PC-9 (cell line): ENCODE measurements at regions of chr14 and their contacts with region 1.

Region 1: GRCh38 chr14:21308479-21309237 is 28.8 kb downstream of the RPGRIP1 start:
- DNase-seq: peak; percentile 84 to 94
- H3K4me3 ChIP-seq: peak overlapping the region; percentile 70
- H3K27ac ChIP-seq: peak overlapping the region; percentile 84
- H3K4me1 ChIP-seq: peaks cover 12% of the 10 kb centered on the region
- H3K27me3 ChIP-seq: no peaks in the 10 kb centered on the region
- CTCF ChIP-seq: no peak

Region 2: DNA sequence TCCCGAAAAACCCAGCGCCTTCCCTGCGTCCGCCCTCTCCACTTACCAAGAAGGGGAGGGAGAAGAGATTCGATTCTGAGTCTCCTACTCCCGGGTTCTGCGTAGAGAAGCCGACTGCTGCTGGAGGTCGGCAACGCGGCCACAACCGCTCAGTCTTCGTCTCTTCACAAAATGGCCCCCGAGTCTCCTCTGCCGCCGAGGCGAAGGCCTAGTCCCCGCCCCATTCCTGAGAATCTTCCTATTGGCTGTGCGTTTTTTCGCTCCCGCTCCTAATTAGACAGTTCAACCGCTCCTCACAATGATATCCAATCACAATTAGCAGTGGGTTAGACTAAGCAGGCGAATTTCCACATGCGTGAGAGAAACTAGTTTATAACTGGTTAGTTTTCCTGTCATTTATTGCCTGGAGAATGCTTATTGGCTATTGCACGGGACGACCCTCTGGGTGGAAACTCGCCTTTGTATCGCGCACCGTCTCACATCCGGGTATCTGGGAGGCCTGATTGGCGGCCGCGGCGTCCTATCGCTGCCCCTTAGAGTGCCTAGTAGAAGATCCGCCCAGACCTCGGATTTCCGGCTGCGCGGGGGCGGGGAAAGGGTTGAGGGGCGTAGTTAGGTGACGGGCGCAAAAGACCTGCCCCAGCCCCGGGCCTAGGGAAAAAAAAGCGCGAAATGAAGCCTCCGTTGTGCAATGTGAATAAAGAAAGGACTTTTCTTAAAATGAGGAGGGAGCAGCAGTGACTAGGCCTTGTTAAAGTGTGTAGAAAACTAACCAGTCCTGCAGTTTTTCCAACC is 39.2 kb before region 1 on chr14 and contains the start of gene HNRNPC:
- CTCF ChIA-PET with region 1: no interaction called
- POLR2A ChIA-PET with region 1: no interaction called
- intact Hi-C with region 1: loop called (anchors 1 kb)
- DNase-seq: peak; percentile 99 to 100
- H3K4me3 ChIP-seq: peak within 1 kb of the TSS; percentile 94
- H3K27ac ChIP-seq: peak within 1 kb of the TSS; percentile 81
- H3K4me1 ChIP-seq: peaks cover 27% of the 10 kb centered on the region
- H3K27me3 ChIP-seq: no peaks in the 10 kb centered on the region
- CTCF ChIP-seq: no peak
- total RNA-seq, gene HNRNPC: 486 and 550 TPM in 2 replicates